Activated naive CD4-positive, alpha-beta T cell treated with anti-CD3 and anti-CD28 coated beads for 36 hours (primary cell): ENCODE measurements at regions of chr6 and their contacts with region 1.

Region 1: DNA sequence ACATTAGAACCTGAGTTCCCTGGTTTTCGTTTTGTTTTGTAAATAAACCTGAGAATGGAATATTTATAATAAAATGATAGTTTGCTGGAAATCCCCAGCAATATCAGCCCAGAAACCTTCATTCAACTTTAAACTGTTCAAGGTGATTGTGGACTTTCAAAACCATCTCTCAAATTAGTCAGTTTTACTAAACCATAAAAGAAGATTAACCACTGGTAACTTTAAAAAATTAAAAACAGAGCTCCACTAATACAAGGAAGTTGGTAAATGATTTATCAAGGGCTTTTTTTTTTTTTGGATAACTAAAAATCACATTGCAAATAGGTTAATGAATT is 10.0 kb downstream of the MBOAT1 start:
- DNase-seq: no peak
- H3K4me3 Mint-ChIP-seq: no peak overlapping the region
- H3K27ac Mint-ChIP-seq: no peak overlapping the region
- H3K4me1 Mint-ChIP-seq: peaks cover 36% of the 10 kb centered on the region
- H3K27me3 Mint-ChIP-seq: no peaks in the 10 kb centered on the region

Region 2: GRCh38 chr6:20266851-20267608 is 64.7 kb after region 1 on chr6:
- CTCF ChIA-PET with region 1: no interaction called
- intact Hi-C with region 1: loop called (anchors 2 kb)
- DNase-seq: peak; percentile 30
- H3K4me3 Mint-ChIP-seq: no peak overlapping the region
- H3K27ac Mint-ChIP-seq: no peak overlapping the region
- H3K4me1 Mint-ChIP-seq: peaks cover 12% of the 10 kb centered on the region
- H3K27me3 Mint-ChIP-seq: no peaks in the 10 kb centered on the region

Region 3: GRCh38 chr6:22062807-22063408 is 1860.6 kb after region 1 on chr6:
- CTCF ChIA-PET with region 1: no interaction called
- intact Hi-C with region 1: loop called (anchors 10 kb)
- DNase-seq: peak; percentile 69
- H3K4me3 Mint-ChIP-seq: peak overlapping the region; percentile 61
- H3K27ac Mint-ChIP-seq: peak overlapping the region; percentile 55
- H3K4me1 Mint-ChIP-seq: peaks cover 16% of the 10 kb centered on the region
- H3K27me3 Mint-ChIP-seq: peaks cover 13% of the 10 kb centered on the region